KBM-7 (cell line): ENCODE measurements at regions of chr10 and their contacts with region 1.

Region 1: DNA sequence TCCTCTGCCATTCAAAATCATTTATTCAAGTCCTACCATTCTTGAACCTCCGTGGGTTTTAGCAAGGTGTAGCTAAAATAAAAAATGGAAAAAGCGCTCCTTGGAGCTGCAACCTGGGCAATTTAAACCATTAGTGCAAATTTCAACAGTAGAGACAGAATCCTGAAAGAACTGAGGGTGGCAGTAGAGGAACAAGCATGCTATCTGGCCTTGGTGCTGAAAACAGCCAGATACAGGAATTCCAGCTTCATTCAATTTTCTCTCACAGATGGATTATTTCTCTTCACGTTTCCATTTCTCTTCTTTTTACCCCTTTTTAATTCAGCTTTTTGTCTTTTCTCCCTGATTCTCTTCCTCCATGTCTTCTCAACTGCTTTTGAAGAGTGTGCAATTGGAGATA is 77.7 kb downstream of the OTUD1 start:
- DNase-seq: peak; percentile 44

Region 2: GRCh38 chr10:23314835-23315239 is 201.7 kb before region 1 on chr10:
- in situ Hi-C with region 1: loop called (anchors 25 kb)
- DNase-seq: peak; percentile 52

Region 3: GRCh38 chr10:23461557-23461956 is 55.0 kb before region 1 on chr10:
- in situ Hi-C with region 1: no loop called
- DNase-seq: no peak

Region 4: GRCh38 chr10:24197263-24197662 is 680.7 kb after region 1 on chr10:
- in situ Hi-C with region 1: loop called (anchors 25 kb)
- DNase-seq: no peak